OCI-LY7 (cell line): ENCODE measurements at regions of chr12 and their contacts with region 1.

Region 1: DNA sequence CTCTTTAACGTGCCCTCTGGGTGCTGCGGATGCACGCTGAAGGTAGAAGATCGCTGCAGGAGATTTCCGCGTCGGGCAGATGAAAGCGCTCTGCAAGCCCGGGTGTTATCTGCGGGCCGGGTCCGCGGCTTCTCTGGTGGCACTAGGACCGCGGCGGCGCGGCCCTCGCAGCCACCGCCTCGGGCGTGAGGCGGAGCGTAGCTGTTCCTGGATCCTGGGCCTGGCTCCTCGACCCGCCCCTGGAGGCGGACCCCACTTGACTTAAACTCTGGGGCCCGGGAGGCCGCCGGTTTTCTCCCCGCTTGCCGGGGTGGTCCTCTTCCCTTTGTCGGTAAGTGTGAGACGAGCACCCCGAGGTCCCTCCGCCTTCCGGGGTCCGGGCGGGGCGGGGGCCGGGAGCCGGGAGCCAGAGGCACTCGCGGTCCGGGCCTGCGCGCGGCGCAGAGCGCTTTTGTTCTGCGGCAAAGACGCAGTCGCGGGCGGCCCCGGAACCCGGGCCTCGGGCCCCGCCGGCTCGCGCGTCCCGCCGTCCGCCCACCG is at the start of gene RESF1:
- DNase-seq: peak; percentile 97
- H3K4me3 ChIP-seq: peak within 1 kb of the TSS; percentile 78
- H3K27ac ChIP-seq: peak within 1 kb of the TSS; percentile 87
- H3K4me1 ChIP-seq: peaks cover 28% of the 10 kb centered on the region
- CTCF ChIP-seq: no peak
- total RNA-seq, gene RESF1: 53.3 and 70.4 TPM in 2 replicates

Region 2: GRCh38 chr12:31749024-31749704 is 210.1 kb before region 1 on chr12:
- CTCF ChIA-PET with region 1: no interaction called
- POLR2A ChIA-PET with region 1: no interaction called
- intact Hi-C with region 1: loop called (anchors 5 kb)
- DNase-seq: peak; percentile 79
- H3K4me3 ChIP-seq: peak overlapping the region; percentile 2
- H3K27ac ChIP-seq: peak overlapping the region; percentile 74
- H3K4me1 ChIP-seq: peaks cover 83% of the 10 kb centered on the region
- CTCF ChIP-seq: no peak

Region 3: GRCh38 chr12:32012249-32012785 is 53.1 kb after region 1 on chr12:
- CTCF ChIA-PET with region 1: no interaction called
- POLR2A ChIA-PET with region 1: no interaction called
- intact Hi-C with region 1: no loop called
- DNase-seq: no peak
- H3K4me3 ChIP-seq: no peak overlapping the region
- H3K27ac ChIP-seq: no peak overlapping the region
- H3K4me1 ChIP-seq: peaks cover 16% of the 10 kb centered on the region
- CTCF ChIP-seq: no peak